ENCODE measurements at regions of chr17 and their contacts with region 1.

Region 1: DNA sequence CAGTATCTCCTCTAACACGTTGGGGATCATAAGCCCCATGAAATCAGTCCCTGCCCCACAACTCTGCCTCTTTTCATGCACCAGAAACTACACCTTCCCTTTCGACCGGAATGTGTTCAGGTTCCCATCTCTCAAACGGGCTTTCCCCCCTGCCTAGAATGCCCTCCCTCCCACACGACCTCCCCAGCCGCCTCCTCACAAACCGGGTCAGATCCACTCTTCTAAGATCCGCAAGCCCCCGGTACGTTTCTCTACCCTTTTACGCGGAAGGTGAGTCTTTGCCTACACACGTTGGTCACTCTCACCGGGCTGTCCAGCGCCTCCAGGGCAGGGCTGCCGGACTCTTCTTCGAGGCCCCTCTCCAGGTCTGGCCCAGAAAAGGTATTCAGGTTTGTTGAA is 708 bp downstream of the DHX33 start:
- DNase-seq: no peak
- ATAC-seq: no peak
- H3K4me3 Mint-ChIP-seq: peak overlapping the region; percentile 89
- H3K27ac Mint-ChIP-seq: peak overlapping the region; percentile 43
- H3K4me1 Mint-ChIP-seq: peaks cover 23% of the 10 kb centered on the region
- H3K27me3 Mint-ChIP-seq: no peaks in the 10 kb centered on the region
- CTCF ChIP-seq: no peak

Region 2: DNA sequence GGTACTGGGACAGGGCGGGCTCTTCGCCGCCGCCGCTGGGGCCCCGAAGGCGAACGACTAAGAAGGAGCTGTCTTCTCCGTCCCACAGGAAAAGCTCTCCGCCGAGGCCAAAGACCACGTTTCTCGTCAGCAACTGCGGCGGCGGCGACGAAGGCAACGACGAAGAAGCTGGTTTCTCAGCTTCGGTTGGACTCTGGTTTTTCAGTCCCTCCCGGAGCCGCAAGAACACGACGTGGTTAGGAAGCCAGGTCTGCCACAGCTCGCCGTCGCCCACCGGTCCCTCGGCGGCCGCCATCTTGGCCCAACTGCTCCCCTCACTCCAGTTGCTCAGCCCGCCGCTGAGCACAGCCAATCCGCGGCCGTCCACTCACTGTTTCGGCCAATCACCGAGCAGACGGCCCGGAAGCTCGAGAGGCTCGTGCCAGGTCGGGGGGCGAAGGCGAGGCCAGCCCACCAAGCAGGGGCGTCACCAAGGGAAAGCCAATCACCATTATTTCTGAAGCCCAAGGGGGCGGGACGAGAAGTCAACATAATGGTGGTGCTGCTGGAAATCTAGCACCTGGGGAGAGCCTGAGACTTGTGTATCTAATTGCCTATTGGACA is 48.6 kb before region 1 on chr17 and contains the start of gene NUP88:
- CTCF ChIA-PET with region 1: interaction called, 3 read pairs
- POLR2A ChIA-PET with region 1: interaction called, 10 read pairs
- DNase-seq: peak; percentile 97
- ATAC-seq: peak; percentile 98
- H3K4me3 Mint-ChIP-seq: peak within 1 kb of the TSS; percentile 100
- H3K27ac Mint-ChIP-seq: peak within 1 kb of the TSS; percentile 99
- H3K4me1 Mint-ChIP-seq: peaks cover 11% of the 10 kb centered on the region
- H3K27me3 Mint-ChIP-seq: no peaks in the 10 kb centered on the region
- CTCF ChIP-seq: no peak
- total RNA-seq, gene NUP88: 63.0 to 87.7 TPM (median 65.4 TPM) in 3 replicates

Region 3: GRCh38 chr17:5438716-5439445 is 29.2 kb before region 1 on chr17 and contains the start of gene C1QBP:
- CTCF ChIA-PET with region 1: interaction called, 23 read pairs
- POLR2A ChIA-PET with region 1: interaction called, 4 read pairs
- DNase-seq: peak; percentile 96
- ATAC-seq: peak; percentile 91
- H3K4me3 Mint-ChIP-seq: peak within 1 kb of the TSS; percentile 88
- H3K27ac Mint-ChIP-seq: peak within 1 kb of the TSS; percentile 89
- H3K4me1 Mint-ChIP-seq: peaks cover 20% of the 10 kb centered on the region
- H3K27me3 Mint-ChIP-seq: no peaks in the 10 kb centered on the region
- CTCF ChIP-seq: peak; percentile 90
- total RNA-seq, gene C1QBP: 377 to 429 TPM (median 382 TPM) in 3 replicates

Region 4: DNA sequence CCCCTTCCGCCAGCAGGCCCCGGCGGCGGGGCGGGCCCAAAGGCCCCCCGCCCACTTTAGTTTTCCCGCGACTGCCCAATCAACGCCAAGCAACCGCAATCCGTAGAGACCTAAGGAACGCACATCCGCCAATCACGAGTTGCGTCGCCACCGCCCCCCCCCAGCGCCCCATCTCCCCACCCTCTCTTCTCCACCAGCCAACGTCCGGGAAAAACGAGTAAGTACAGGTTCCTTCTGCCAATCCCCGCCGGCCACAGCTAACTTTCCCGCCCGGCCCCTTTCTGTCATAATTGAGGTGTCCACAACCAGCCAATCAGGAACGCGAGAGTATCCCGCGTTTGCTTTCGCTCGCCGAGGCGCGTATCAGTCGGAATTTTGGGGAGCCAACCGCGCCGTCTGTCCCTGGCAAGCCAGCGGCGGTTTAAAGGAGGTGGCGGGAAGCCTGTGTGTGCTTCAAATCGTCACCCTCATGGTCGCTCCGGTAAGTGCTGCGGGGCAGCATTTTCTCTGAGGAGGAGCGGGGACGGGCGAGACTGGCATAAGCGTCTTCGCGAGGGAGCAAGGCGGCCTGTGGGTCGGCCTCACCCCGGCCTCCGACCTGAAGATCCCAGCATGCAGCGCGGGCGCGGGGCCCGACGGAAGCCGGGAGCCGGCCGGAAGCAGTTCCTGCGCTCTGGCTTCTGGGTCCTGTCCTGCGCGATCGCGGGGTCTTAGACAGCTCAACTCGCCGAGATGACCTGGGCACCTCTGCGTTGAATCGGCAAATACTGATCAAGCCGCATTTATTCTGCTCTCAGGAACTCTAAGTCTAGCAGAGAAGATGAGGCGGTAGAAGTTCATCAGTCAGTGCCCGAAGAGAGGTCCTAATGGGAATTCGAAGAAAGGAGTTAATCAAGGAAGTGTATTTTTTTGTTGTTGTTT is 18.4 kb after region 1 on chr17 and contains the start of gene MIS12:
- CTCF ChIA-PET with region 1: interaction called, 13 read pairs
- POLR2A ChIA-PET with region 1: interaction called, 17 read pairs
- DNase-seq: peak; percentile 97
- ATAC-seq: peak; percentile 95
- H3K4me3 Mint-ChIP-seq: peak within 1 kb of the TSS; percentile 100
- H3K27ac Mint-ChIP-seq: peak within 1 kb of the TSS; percentile 100
- H3K4me1 Mint-ChIP-seq: peaks cover 26% of the 10 kb centered on the region
- H3K27me3 Mint-ChIP-seq: no peaks in the 10 kb centered on the region
- CTCF ChIP-seq: no peak
- total RNA-seq, gene MIS12: 22.6 to 25.5 TPM (median 24.8 TPM) in 3 replicates

Region 5: DNA sequence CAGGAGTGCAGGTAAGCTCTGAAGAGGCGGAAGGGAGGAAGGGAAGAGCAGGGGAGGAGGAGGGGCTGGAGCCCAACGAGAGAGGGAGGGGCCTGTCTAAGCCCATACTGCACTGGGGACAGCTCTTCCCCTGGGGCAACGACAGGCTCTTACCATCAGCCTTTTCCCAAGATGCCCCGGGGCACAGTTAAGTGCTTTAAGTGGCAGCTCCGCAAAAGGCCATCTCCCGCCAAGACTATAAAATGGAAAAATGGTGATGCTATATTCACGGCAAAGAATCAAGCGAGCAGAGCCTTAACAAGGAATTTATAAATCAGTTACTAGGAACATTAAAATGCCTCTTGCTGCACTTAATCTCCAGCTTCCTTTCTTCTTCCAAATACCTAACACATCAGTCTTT is 226.5 kb after region 1 on chr17:
- CTCF ChIA-PET with region 1: no interaction called
- POLR2A ChIA-PET with region 1: no interaction called
- DNase-seq: peak; percentile 59
- ATAC-seq: peak; percentile 97
- H3K4me3 Mint-ChIP-seq: no peak overlapping the region
- H3K27ac Mint-ChIP-seq: peak overlapping the region; percentile 13; the same call in 1 of the 2 replicates
- H3K4me1 Mint-ChIP-seq: peaks cover 47% of the 10 kb centered on the region
- H3K27me3 Mint-ChIP-seq: no peaks in the 10 kb centered on the region
- CTCF ChIP-seq: no peak

Measured in WTC11 (cell line).